Endothelial cell of umbilical vein (primary cell): ENCODE measurements at regions of chr1 and their contacts with region 1.

Region 1: GRCh38 chr1:60924964-60925798 is 157.2 kb upstream of the NFIA start:
- DNase-seq: no peak
- H3K4me3 ChIP-seq: no peak overlapping the region
- H3K27ac ChIP-seq: no peak overlapping the region
- H3K4me1 ChIP-seq: peaks cover 10% of the 10 kb centered on the region
- H3K27me3 ChIP-seq: no peaks in the 10 kb centered on the region
- CTCF ChIP-seq: no peak
- POLR2A ChIP-seq: no peak

Region 2: GRCh38 chr1:60911966-60912697 is 13.0 kb before region 1 on chr1:
- CTCF ChIA-PET with region 1: no interaction called
- POLR2A ChIA-PET with region 1: no interaction called
- dilution Hi-C with region 1: no loop called
- intact Hi-C with region 1: loop called (anchors 1 kb)
- DNase-seq: peak; percentile 62
- H3K4me3 ChIP-seq: no peak overlapping the region
- H3K27ac ChIP-seq: peak overlapping the region; percentile 27
- H3K4me1 ChIP-seq: peaks cover 13% of the 10 kb centered on the region
- H3K27me3 ChIP-seq: no peaks in the 10 kb centered on the region
- CTCF ChIP-seq: no peak
- POLR2A ChIP-seq: no peak

Region 3: DNA sequence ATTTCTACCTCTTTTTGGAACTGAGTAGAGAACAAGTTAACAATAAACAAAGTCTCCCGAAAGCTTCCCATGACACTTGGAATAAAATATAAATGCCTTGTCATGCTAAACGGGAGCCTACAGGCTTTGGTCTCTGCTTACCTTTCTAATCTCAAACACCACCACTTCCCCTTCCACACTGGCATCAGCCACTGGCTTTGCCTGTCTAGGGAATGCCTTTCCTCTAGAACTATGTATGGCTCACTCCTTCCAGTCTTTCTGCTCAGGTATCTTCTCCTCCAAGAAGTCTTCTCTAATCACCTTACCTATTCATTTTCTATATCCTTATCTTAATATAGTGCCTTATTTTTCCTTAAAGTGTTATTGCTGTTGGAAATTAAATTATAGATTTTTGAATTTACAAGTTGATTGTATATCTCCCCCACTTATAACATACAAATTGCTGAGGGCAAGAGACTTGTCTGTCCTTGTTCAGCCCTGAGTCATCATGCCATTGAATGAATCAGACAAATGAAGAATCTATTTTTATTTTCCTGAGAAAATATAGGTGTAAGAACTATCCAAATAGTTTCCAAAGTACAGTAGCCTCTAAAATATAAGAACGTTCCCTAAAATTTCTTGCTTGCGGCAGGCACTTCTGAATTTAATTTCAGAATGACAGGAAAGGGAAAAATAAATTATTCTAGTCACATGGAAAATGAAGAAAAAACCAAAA is 680.6 kb after region 1 on chr1:
- CTCF ChIA-PET with region 1: no interaction called
- POLR2A ChIA-PET with region 1: no interaction called
- dilution Hi-C with region 1: no loop called
- intact Hi-C with region 1: no loop called
- DNase-seq: peak; percentile 66
- H3K4me3 ChIP-seq: no peak overlapping the region
- H3K27ac ChIP-seq: peak overlapping the region; percentile 86
- H3K4me1 ChIP-seq: peaks cover 22% of the 10 kb centered on the region
- H3K27me3 ChIP-seq: no peaks in the 10 kb centered on the region
- CTCF ChIP-seq: no peak
- POLR2A ChIP-seq: no peak